ENCODE measurements at regions of chr21 and their contacts with region 1.

Region 1: DNA sequence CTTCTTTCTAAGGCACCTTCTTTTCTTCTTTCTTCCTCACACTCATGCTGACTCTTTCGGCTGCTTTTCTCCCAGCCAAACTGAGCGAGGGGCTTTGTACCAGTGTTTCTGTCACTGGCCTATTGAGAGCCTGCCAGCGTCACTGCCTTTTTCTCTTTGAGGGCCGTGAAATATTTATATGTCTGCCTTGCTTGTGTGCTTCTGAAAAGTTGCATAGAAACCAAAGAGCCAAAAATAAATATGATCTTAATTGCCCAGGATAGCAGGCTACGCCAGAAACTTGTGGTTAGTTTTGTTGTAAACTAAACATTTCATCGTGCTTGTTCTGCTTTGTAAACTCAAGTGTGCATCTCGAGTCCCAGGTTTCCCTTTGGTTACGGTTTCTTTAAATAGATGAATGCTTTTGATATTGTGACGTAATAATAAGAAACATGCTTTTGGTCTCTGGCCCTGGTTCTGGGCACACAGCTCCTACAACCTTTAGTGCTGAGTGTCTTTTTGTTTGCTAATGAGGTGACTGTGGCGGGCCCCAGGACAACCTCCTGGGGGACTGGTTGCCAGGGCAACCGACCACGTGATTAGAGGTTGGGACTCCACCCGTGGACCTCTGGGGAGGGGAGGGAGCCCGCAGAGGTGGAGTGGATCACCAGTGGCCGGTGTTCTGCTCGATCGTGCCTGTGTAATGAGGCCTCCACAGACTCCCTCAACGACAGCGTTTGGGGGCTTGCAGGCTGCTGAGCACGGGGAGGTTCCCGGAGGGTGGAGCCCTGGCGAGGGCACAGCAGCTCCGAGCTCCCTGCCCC is 10.9 kb downstream of the SLC37A1 start:
- DNase-seq: peak; percentile 63
- H3K4me3 Mint-ChIP-seq: no peak overlapping the region
- H3K27ac Mint-ChIP-seq: no peak overlapping the region
- H3K4me1 Mint-ChIP-seq: peaks cover 56% of the 10 kb centered on the region
- H3K27me3 Mint-ChIP-seq: no peaks in the 10 kb centered on the region

Region 2: DNA sequence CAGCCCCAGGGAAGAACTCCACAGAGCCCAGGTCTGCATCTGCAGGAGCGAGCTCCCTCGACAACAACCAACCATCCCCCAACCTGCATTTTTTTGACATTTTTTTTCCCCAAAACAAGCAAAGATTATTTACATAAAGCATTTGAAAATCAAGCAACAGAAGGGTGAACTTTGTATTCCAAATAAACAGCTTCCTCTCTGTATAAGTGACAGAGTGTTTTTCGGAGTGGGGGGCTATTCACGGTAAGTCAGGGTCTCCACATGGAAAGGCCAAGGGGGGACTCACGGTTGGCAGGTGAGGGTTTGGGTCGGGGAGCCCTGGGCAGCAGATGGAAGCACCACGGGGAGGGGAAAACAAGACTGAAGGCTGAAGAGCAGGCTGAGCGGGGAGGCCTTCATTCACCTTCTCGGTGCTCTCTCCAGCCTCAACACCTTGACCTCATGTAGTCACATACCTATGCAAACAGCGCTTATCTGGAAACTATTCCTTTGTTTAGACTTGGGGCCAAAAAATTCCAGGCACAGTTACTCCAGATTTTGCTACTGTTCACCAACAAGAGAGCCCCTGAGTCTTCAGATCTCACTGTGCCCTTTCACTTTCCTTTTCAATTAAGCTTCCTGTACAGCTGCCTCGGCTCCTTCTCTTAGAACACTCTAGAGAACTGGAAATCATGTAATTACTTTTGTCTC is 598.3 kb before region 1 on chr21:
- CTCF ChIA-PET with region 1: no interaction called
- intact Hi-C with region 1: loop called (anchors 5 kb)
- DNase-seq: peak; percentile 53
- H3K4me3 Mint-ChIP-seq: peak overlapping the region; percentile 85
- H3K27ac Mint-ChIP-seq: peak overlapping the region; percentile 97
- H3K4me1 Mint-ChIP-seq: peaks cover 71% of the 10 kb centered on the region
- H3K27me3 Mint-ChIP-seq: no peaks in the 10 kb centered on the region

Region 3: DNA sequence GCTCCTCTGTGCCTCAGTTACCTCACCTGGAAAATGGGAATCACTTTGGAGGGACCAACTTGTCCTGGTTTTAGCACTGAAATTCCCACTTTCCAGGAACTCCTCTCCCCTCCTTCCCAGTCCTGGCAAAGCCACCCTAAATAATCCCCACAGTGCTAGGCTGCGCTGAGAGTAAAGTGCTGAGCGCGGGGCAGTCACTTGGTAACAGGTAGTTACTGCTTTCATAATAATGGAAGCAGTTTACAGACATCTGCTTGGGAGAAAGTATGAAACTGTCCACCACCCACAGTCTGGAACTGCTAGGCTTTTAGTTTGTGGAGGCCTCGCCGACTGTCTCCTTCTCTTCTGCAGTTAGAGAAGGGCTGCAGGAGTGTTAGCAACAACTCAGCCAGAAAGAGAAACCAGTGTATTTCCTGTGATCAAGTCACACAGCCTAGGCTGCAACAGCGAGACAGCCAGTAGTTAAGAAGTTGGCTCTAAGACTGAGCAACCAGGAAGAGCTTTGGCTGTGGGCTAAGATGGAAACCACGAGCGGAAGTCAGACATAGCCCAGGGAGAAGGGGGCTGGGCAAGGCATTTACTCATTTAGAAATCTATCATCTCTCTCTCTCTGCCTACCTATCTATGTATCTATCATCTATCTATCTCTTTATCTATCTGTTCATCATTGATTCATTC is 336.4 kb before region 1 on chr21:
- CTCF ChIA-PET with region 1: no interaction called
- intact Hi-C with region 1: loop called (anchors 1 kb)
- DNase-seq: peak; percentile 94
- H3K4me3 Mint-ChIP-seq: peak overlapping the region; percentile 60
- H3K27ac Mint-ChIP-seq: peak overlapping the region; percentile 95
- H3K4me1 Mint-ChIP-seq: peaks cover 70% of the 10 kb centered on the region
- H3K27me3 Mint-ChIP-seq: no peaks in the 10 kb centered on the region

Region 4: GRCh38 chr21:42414928-42415769 is 109.4 kb before region 1 on chr21:
- CTCF ChIA-PET with region 1: no interaction called
- intact Hi-C with region 1: loop called (anchors 5 kb)
- DNase-seq: peak; percentile 99
- H3K4me3 Mint-ChIP-seq: peak overlapping the region; percentile 64
- H3K27ac Mint-ChIP-seq: peak overlapping the region; percentile 94
- H3K4me1 Mint-ChIP-seq: peaks cover 64% of the 10 kb centered on the region
- H3K27me3 Mint-ChIP-seq: no peaks in the 10 kb centered on the region

Region 5: GRCh38 chr21:42496122-42496900 is 28.2 kb before region 1 on chr21 and contains the start of gene RSPH1:
- CTCF ChIA-PET with region 1: no interaction called
- intact Hi-C with region 1: loop called (anchors 1 kb)
- DNase-seq: peak; percentile 100
- H3K4me3 Mint-ChIP-seq: peak within 1 kb of the TSS; percentile 89
- H3K27ac Mint-ChIP-seq: peak within 1 kb of the TSS; percentile 84
- H3K4me1 Mint-ChIP-seq: peaks cover 24% of the 10 kb centered on the region
- H3K27me3 Mint-ChIP-seq: no peaks in the 10 kb centered on the region
- total RNA-seq, gene RSPH1: 0.22 TPM in 1 of 2 experiments, not detected in the other

Region 6: GRCh38 chr21:42554286-42554961 is 29.9 kb after region 1 on chr21:
- CTCF ChIA-PET with region 1: no interaction called
- intact Hi-C with region 1: no loop called
- DNase-seq: no peak
- H3K4me3 Mint-ChIP-seq: no peak overlapping the region
- H3K27ac Mint-ChIP-seq: no peak overlapping the region
- H3K4me1 Mint-ChIP-seq: no peaks in the 10 kb centered on the region
- H3K27me3 Mint-ChIP-seq: no peaks in the 10 kb centered on the region

Region 7: DNA sequence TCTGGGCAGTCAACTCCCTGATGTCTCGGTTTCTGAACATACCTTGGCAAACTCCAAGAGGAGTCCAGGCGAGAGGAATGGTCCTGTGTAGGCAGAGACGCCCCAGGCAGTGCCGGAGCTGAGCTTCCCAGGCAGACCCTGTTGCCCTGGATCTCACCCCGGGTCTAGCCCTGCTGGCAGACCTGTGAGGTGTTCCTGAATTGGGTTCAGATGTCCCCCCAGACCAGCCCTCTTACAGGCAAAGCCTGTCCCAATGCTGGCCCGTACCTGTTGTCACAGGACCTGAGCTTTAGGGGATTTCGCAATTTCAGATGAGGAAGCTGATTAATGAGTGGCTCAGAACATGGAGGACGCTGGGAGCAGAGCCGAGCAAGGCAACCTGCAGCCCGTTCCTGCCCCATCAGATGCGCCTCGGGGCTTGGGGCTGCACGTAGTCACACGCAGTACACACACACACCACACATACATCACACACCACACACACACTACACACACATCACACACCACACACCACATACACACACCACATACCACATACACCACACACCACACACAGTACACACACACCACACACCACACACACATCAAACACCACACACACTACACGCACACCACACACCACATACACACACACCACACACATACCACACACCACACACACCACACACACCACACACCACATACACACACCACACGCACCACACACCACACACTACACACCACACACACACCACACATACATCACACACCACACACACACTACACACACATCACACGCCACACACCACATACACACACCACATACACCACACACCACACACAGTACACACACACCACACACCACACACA is 90.5 kb after region 1 on chr21:
- CTCF ChIA-PET with region 1: no interaction called
- intact Hi-C with region 1: loop called (anchors 5 kb)
- DNase-seq: peak; percentile 84
- H3K4me3 Mint-ChIP-seq: no peak overlapping the region
- H3K27ac Mint-ChIP-seq: no peak overlapping the region
- H3K4me1 Mint-ChIP-seq: peaks cover 6% of the 10 kb centered on the region
- H3K27me3 Mint-ChIP-seq: no peaks in the 10 kb centered on the region

Region 8: GRCh38 chr21:42806509-42807140 is 282.1 kb after region 1 on chr21:
- CTCF ChIA-PET with region 1: no interaction called
- intact Hi-C with region 1: no loop called
- DNase-seq: no peak
- H3K4me3 Mint-ChIP-seq: no peak overlapping the region
- H3K27ac Mint-ChIP-seq: no peak overlapping the region
- H3K4me1 Mint-ChIP-seq: no peaks in the 10 kb centered on the region
- H3K27me3 Mint-ChIP-seq: no peaks in the 10 kb centered on the region

Measured in activated naive CD4-positive, alpha-beta T cell treated with anti-CD3 and anti-CD28 coated beads for 36 hours (primary cell).